ENCODE measurements at regions of chr1 and their contacts with region 1.

Region 1: DNA sequence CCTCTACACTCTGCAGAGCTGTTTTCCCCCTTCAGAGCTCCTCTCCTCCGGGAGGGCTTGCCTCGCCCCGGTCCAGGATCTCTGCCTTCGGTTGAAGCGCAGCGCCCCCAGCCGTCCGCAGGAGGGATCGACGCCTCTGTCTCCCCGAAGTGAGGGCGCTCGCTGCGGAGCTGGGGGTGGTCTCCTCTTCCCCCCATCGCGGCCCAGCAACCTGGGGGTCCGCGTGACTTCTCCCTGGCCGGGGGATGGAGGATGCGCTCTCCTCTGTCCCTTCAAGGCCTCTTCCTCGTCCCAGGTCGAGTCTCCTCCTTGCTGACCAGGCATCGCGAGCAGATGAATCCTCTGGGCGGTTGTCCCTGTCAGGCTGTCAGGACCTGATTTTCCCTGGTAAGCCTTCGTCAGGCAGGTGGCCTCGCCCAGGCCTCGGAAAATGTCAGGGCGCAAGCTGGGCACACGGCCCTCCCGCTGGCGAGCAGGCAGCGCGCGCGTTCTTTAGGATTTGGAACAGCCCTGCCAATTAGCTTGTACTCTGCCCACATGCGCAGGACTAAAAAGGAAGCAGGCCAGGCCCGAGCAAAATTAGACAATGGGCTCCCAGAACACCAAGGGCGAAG is 90.5 kb downstream of the EDEM3 start:
- DNase-seq: peak; percentile 83
- H3K4me3 ChIP-seq: peak overlapping the region; percentile 32
- H3K27ac ChIP-seq: no peak overlapping the region
- H3K4me1 ChIP-seq: no peaks in the 10 kb centered on the region
- H3K27me3 ChIP-seq: no peaks in the 10 kb centered on the region
- CTCF ChIP-seq: peak; percentile 83

Region 2: DNA sequence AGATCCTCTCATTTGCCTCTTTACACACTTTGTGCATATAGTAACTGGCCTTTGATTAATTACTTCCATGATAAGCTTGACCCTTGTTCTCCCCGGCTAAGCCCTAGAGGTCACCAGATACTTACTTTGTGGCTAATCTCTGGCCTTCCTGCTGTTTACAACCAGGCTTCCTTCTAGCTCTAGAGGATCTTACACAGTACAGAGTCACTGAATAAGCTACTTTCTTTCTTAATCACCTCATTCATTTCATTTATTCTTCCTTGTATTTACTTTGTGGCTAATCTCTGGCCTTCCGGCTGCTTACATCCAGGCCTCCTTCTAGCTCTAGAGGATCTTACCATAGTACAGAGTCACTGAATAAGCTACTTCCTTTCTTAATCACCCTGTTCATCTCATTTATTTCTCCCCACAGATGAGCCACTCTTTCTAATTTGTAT is 421.6 kb before region 1 on chr1:
- intact Hi-C with region 1: loop called (anchors 10 kb)
- DNase-seq: no peak
- H3K4me3 ChIP-seq: no peak overlapping the region
- H3K27ac ChIP-seq: no peak overlapping the region
- H3K4me1 ChIP-seq: no peaks in the 10 kb centered on the region
- H3K27me3 ChIP-seq: no peaks in the 10 kb centered on the region
- CTCF ChIP-seq: no peak

Region 3: DNA sequence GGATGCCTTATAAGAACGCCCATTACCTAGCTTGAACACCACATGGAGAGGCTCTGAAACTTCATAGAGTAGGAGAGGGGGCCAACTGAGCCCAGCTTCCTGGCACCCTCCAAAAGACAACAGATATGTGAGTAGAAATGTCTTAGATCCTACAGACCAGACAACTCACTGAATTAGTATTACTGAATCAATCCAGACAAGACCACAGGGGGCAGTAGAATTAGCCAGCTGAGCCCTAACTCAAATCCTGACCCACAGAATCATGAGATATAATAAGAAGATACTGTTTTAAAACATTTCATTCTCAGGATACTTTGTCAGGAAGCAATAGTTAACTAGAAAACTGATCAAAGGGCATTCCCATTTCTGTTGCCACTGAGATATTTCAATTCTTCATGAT is 323.2 kb before region 1 on chr1:
- intact Hi-C with region 1: no loop called
- DNase-seq: no peak
- H3K4me3 ChIP-seq: no peak overlapping the region
- H3K27ac ChIP-seq: no peak overlapping the region
- H3K4me1 ChIP-seq: no peaks in the 10 kb centered on the region
- H3K27me3 ChIP-seq: no peaks in the 10 kb centered on the region
- CTCF ChIP-seq: no peak

Region 4: GRCh38 chr1:184386312-184387068 is 277.7 kb before region 1 on chr1 and contains the start of gene C1orf21:
- intact Hi-C with region 1: loop called (anchors 10 kb)
- DNase-seq: peak; percentile 91
- H3K4me3 ChIP-seq: peak within 1 kb of the TSS; percentile 80
- H3K27ac ChIP-seq: peak within 1 kb of the TSS; percentile 75
- H3K4me1 ChIP-seq: no peaks in the 10 kb centered on the region
- H3K27me3 ChIP-seq: no peaks in the 10 kb centered on the region
- CTCF ChIP-seq: no peak
- total RNA-seq, gene C1orf21: 68.1 to 81.1 TPM

Region 5: GRCh38 chr1:184465489-184466146 is 198.5 kb before region 1 on chr1:
- intact Hi-C with region 1: no loop called
- DNase-seq: no peak
- H3K4me3 ChIP-seq: no peak overlapping the region
- H3K27ac ChIP-seq: no peak overlapping the region
- H3K4me1 ChIP-seq: no peaks in the 10 kb centered on the region
- H3K27me3 ChIP-seq: no peaks in the 10 kb centered on the region
- CTCF ChIP-seq: no peak

Region 6: DNA sequence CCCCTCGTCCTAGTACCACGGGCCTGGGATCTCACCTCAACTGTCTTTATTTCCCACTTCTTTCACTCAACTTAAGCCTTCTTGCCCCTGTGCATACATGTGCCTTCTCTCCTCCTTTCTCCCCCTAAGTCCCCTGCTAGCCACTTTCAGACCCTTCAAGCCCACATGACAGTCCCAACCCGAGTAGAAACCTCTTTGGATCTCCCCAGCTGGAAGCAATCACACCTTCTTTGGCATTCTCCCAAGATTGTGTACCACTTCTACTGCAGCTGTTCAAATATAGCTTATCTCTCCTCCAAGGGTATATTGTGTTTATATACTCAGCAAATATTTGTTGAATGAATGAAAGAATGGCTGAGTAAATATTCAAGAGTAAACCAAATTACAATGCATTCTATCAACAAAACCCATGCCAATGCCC is 241.3 kb after region 1 on chr1:
- intact Hi-C with region 1: no loop called
- DNase-seq: peak; percentile 61
- H3K4me3 ChIP-seq: no peak overlapping the region
- H3K27ac ChIP-seq: no peak overlapping the region
- H3K4me1 ChIP-seq: no peaks in the 10 kb centered on the region
- H3K27me3 ChIP-seq: peaks cover 4% of the 10 kb centered on the region
- CTCF ChIP-seq: no peak